ENCODE measurements at regions of chr1 and their contacts with region 1.

Region 1: DNA sequence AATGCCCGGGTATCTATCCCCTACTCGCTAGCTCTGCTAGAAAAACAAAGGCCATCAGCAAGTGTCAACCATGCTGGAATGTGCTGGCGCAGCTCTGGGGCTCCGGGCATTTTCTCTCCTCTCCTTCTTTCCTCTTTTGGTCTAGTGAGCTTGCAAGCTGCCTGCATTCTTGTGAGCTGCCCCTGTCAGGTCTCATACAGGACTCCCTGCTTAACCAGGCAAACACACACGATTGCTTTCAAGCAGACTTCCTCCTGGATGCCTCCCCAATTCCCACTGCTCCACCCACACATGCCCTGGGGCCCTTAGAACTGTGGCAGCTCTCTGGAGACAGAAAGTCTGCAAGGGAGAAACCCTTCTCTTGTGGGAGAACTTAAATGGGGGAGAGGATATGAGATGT is 35.7 kb upstream of the SUCO start:
- DNase-seq: peak; percentile 52
- ATAC-seq: peak; percentile 56
- H3K4me3 ChIP-seq: peak overlapping the region in 2 of 3 experiments; percentile 8 to 27; a peak in 1 of 6 replicates
- H3K27ac ChIP-seq: no peak overlapping the region
- H3K4me1 ChIP-seq: peaks cover 77% of the 10 kb centered on the region
- H3K27me3 ChIP-seq: no peaks in the 10 kb centered on the region
- CTCF ChIP-seq: no peak
- EP300 ChIP-seq: no peak
- POLR2A ChIP-seq: no peak
- RAD21 ChIP-seq: no peak

Region 2: DNA sequence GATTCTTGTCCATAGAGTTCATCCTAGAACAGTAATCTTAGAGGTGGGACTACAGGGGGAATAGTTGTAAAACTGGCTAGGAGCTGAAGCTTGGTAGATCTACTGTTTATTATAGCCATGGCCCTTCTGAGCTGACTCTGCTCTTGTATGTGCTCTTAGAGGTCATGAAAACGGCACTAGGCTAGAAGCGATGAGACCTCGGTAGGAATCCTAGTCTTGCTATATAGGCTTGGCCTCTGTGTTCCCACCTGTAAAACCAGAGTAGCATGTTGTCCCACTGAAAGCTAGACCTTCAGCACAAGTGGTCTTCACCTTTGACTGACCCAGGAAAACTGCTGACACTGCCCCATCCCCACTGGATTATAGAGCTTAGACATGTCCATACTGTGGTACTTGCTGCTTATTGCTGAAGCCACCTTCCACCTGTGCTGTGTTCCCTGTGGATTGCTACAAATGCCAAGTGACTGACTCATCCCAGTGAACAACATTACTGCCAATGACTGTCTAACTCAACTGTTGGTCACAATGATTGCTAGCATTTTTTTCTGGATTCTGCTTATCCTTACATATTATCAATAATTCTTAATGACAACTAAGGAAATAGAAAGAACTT is 30.3 kb before region 1 on chr1:
- CTCF ChIA-PET with region 1: no interaction called
- POLR2A ChIA-PET with region 1: interaction called, 19 read pairs
- in situ Hi-C with region 1: no loop called
- intact Hi-C with region 1: no loop called
- DNase-seq: peak; percentile 53
- ATAC-seq: peak; percentile 68
- H3K4me3 ChIP-seq: no peak overlapping the region
- H3K27ac ChIP-seq: no peak overlapping the region
- H3K4me1 ChIP-seq: peaks cover 60% of the 10 kb centered on the region
- H3K27me3 ChIP-seq: no peaks in the 10 kb centered on the region
- CTCF ChIP-seq: no peak
- EP300 ChIP-seq: 0 out of 4 replicates have a peak, but pooled peaks of 1 of the 2 experiments have one; percentile 7
- POLR2A ChIP-seq: no peak
- RAD21 ChIP-seq: no peak

Measured in HepG2 (cell line).